Naive thymus-derived CD4-positive, alpha-beta T cell (primary cell): ENCODE measurements at regions of chr11 and their contacts with region 1.

Region 1: GRCh38 chr11:72793425-72794367 is at the start of gene STARD10:
- DNase-seq: peak; percentile 90 to 97 (median 96)
- ATAC-seq: peak; percentile 97
- H3K4me3 ChIP-seq: peak within 1 kb of the TSS; percentile 89
- H3K4me3 Mint-ChIP-seq: peak within 1 kb of the TSS; percentile 78 to 100 (median 98)
- H3K27ac ChIP-seq: peak within 1 kb of the TSS; percentile 99
- H3K27ac Mint-ChIP-seq: peak within 1 kb of the TSS; percentile 99 to 100 (median 99)
- H3K4me1 ChIP-seq: peaks cover 16 to 18% of the 10 kb centered on the region in 2 donors
- H3K4me1 Mint-ChIP-seq: peaks cover 19 to 35% (median 28%) of the 10 kb centered on the region in 7 donors
- H3K27me3 ChIP-seq: no peaks in the 10 kb centered on the region
- H3K27me3 Mint-ChIP-seq: no peaks in the 10 kb centered on the region
- total RNA-seq, gene STARD10: 10.9 to 26.1 (median 16.4) TPM

Region 2: GRCh38 chr11:72112321-72113219 is 681.1 kb before region 1 on chr11 and contains the start of gene ANAPC15:
- CTCF ChIA-PET with region 1: no interaction called
- POLR2A ChIA-PET with region 1: no interaction called
- intact Hi-C with region 1: loop called in 1 of 2 experiments (anchors 10 kb)
- DNase-seq: peak; percentile 83 to 100 (median 99)
- ATAC-seq: peak; percentile 91
- H3K4me3 ChIP-seq: peak within 1 kb of the TSS; percentile 85
- H3K4me3 Mint-ChIP-seq: peak within 1 kb of the TSS; percentile 73 to 100 (median 96)
- H3K27ac ChIP-seq: peak within 1 kb of the TSS; percentile 92
- H3K27ac Mint-ChIP-seq: peak within 1 kb of the TSS; percentile 97 to 100 (median 98)
- H3K4me1 ChIP-seq: peaks cover 12 to 14% of the 10 kb centered on the region in 2 donors
- H3K4me1 Mint-ChIP-seq: peaks cover 12 to 29% (median 25%) of the 10 kb centered on the region in 7 donors
- H3K27me3 ChIP-seq: no peaks in the 10 kb centered on the region
- H3K27me3 Mint-ChIP-seq: peaks cover 0 to 6% (median 0%) of the 10 kb centered on the region in 5 donors
- total RNA-seq, gene ANAPC15: 43.0 to 59.6 (median 44.1) TPM

Region 3: DNA sequence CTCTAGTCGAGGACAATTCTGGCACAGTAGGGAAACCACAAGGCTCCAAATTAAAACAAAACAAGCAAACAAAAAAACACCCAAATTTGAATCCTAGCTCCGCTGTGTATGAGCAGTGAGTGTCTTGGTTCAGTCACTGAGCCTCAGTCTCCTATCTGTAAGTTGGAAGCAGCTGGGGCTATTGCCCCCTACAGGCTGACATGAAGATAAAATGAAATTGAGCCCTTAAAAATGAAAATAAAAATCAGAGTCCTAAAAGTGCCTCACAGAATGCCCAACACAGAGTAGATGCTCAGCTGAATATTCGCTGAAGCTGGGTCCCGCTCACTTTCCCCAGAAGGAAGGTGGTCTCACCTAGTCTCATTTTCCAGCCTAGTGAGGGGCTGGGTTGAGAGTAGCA is 184.7 kb before region 1 on chr11:
- CTCF ChIA-PET with region 1: no interaction called
- POLR2A ChIA-PET with region 1: no interaction called
- intact Hi-C with region 1: no loop called
- DNase-seq: peak in 1 of 9 donors; percentile 28
- ATAC-seq: no peak
- H3K4me3 ChIP-seq: no peak overlapping the region
- H3K4me3 Mint-ChIP-seq: no peak overlapping the region
- H3K27ac ChIP-seq: no peak overlapping the region
- H3K27ac Mint-ChIP-seq: no peak overlapping the region
- H3K4me1 ChIP-seq: no peaks in the 10 kb centered on the region
- H3K4me1 Mint-ChIP-seq: peaks cover 2 to 14% (median 5%) of the 10 kb centered on the region in 7 donors
- H3K27me3 ChIP-seq: no peaks in the 10 kb centered on the region
- H3K27me3 Mint-ChIP-seq: peaks cover 8 to 38% (median 28%) of the 10 kb centered on the region in 5 donors

Region 4: GRCh38 chr11:72727521-72727920 is 66.2 kb before region 1 on chr11:
- CTCF ChIA-PET with region 1: interaction called, 102 read pairs
- POLR2A ChIA-PET with region 1: interaction called, 31 read pairs
- intact Hi-C with region 1: loop called (anchors 1 kb)
- DNase-seq: no peak
- ATAC-seq: peak; percentile 21
- H3K4me3 ChIP-seq: no peak overlapping the region
- H3K4me3 Mint-ChIP-seq: no peak overlapping the region
- H3K27ac ChIP-seq: no peak overlapping the region
- H3K27ac Mint-ChIP-seq: peak overlapping the region; percentile 35 to 88 (median 56)
- H3K4me1 ChIP-seq: peaks cover 13 to 17% of the 10 kb centered on the region in 2 donors
- H3K4me1 Mint-ChIP-seq: peaks cover 22 to 49% (median 43%) of the 10 kb centered on the region in 7 donors
- H3K27me3 ChIP-seq: no peaks in the 10 kb centered on the region
- H3K27me3 Mint-ChIP-seq: no peaks in the 10 kb centered on the region

Region 5: DNA sequence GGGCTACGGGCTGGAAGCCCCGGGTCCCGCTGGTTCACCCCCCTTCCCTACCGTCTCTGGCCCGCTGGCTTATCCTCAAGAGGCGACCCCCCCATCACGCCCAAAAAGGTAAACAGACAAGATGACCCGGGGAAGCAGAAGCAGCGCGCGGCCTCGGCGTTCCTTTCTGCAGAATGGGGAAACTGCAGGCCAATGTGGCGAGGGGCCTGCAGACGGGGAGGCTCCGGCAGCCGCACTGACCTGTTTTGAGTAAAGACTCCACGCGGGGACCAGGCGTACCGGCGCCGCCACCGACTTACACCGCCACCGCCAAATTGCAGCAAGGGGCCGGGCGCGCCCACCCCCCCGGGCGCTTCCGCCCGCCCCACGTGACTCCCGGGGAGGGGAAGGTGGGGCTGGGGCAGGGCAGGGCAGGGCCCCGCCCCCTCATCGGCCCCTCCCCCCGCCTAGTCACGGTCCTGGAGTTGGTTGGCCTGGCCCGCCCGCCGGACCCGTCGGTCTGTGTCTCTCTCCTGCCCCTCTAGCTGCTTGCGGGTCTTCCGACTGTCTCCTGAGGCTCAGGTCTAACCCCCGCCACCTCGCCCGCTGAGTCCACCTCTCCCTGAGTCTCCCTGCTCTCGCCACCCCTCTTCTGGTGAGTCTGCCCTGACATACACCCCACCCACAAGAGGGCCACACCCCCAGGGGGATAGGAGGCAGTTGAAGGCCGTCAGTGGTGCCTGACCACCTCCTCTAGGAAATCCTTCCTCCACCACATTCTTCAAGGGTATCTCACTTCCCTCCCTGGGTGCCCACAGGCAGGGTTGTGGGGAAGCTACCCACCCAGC is 41.4 kb before region 1 on chr11 and contains the start of gene ARAP1:
- CTCF ChIA-PET with region 1: no interaction called
- POLR2A ChIA-PET with region 1: interaction called, 8 read pairs
- intact Hi-C with region 1: loop called (anchors 1 kb)
- DNase-seq: peak; percentile 63 to 78 (median 71)
- ATAC-seq: peak; percentile 95
- H3K4me3 ChIP-seq: peak within 1 kb of the TSS; percentile 93
- H3K4me3 Mint-ChIP-seq: peak within 1 kb of the TSS; percentile 89 to 98 (median 96)
- H3K27ac ChIP-seq: peak within 1 kb of the TSS; percentile 81
- H3K27ac Mint-ChIP-seq: peak within 1 kb of the TSS; percentile 87 to 95 (median 93)
- H3K4me1 ChIP-seq: peaks cover 29 to 38% of the 10 kb centered on the region in 2 donors
- H3K4me1 Mint-ChIP-seq: peaks cover 35 to 55% (median 48%) of the 10 kb centered on the region in 7 donors
- H3K27me3 ChIP-seq: no peaks in the 10 kb centered on the region
- H3K27me3 Mint-ChIP-seq: no peaks in the 10 kb centered on the region
- total RNA-seq, gene ARAP1: 119 to 317 (median 156) TPM

Region 6: GRCh38 chr11:72814286-72815109 is 20.8 kb after region 1 on chr11 and contains the start of gene ATG16L2:
- CTCF ChIA-PET with region 1: interaction called, 10 read pairs
- POLR2A ChIA-PET with region 1: interaction called, 18 read pairs
- intact Hi-C with region 1: loop called (anchors 1 kb)
- DNase-seq: peak in 8 of 9 donors; percentile 53 to 96 (median 92)
- ATAC-seq: peak; percentile 89
- H3K4me3 ChIP-seq: peak within 1 kb of the TSS; percentile 89
- H3K4me3 Mint-ChIP-seq: peak within 1 kb of the TSS; percentile 97 to 99 (median 98)
- H3K27ac ChIP-seq: peak within 1 kb of the TSS; percentile 100
- H3K27ac Mint-ChIP-seq: peak within 1 kb of the TSS; percentile 86 to 99 (median 98)
- H3K4me1 ChIP-seq: peaks cover 18 to 23% of the 10 kb centered on the region in 2 donors
- H3K4me1 Mint-ChIP-seq: peaks cover 31 to 67% (median 52%) of the 10 kb centered on the region in 7 donors
- H3K27me3 ChIP-seq: no peaks in the 10 kb centered on the region
- H3K27me3 Mint-ChIP-seq: no peaks in the 10 kb centered on the region
- total RNA-seq, gene ATG16L2: 99.5 to 199 (median 166) TPM